HCT116 (cell line): ENCODE measurements at regions of chr12 and their contacts with region 1.

Region 1: GRCh38 chr12:91326058-91327027 is 143.7 kb upstream of the DCN start:
- DNase-seq: peak; percentile 19
- ATAC-seq: peak; percentile 55
- H3K4me3 ChIP-seq: no peak overlapping the region
- H3K27ac ChIP-seq: no peak overlapping the region
- H3K4me1 ChIP-seq: no peaks in the 10 kb centered on the region
- H3K27me3 ChIP-seq: no peaks in the 10 kb centered on the region
- CTCF ChIP-seq: peak; percentile 60 to 70 (median 66); a peak in 5 of 6 replicates
- POLR2A ChIP-seq: no peak
- RAD21 ChIP-seq: peak; percentile 64

Region 2: GRCh38 chr12:90978117-90978770 is 348.1 kb before region 1 on chr12:
- CTCF ChIA-PET with region 1: interaction called, 13 read pairs
- POLR2A ChIA-PET with region 1: no interaction called
- RAD21 ChIA-PET with region 1: no interaction called
- intact Hi-C with region 1: loop called (anchors 1 kb)
- DNase-seq: peak; percentile 43
- ATAC-seq: peak; percentile 92
- H3K4me3 ChIP-seq: no peak overlapping the region
- H3K27ac ChIP-seq: no peak overlapping the region
- H3K4me1 ChIP-seq: peaks cover 0 to 9% of the 10 kb centered on the region in 2 experiments; a peak in 1 of 4 replicates
- H3K27me3 ChIP-seq: no peaks in the 10 kb centered on the region
- CTCF ChIP-seq: peak; percentile 55 to 82 (median 75)
- POLR2A ChIP-seq: no peak
- RAD21 ChIP-seq: peak; percentile 86

Region 3: DNA sequence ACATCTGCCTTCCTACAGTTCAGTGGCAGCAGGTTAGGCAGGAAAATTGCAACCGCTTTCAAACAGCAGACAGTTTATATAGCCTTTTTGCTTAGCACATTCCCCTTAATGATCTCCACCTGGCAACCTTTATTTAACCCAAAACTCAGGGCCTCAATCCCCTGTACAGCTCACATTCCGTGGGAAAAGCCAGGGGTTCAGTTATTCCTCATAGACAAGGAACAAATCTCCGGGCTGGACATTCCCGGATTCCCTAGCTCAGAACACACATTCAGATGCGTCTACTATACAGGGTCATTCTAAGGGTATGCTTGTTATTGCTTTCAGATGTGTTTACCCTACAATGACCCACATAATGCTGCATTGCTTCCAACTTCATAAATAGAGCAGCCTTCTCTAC is 69.9 kb before region 1 on chr12:
- CTCF ChIA-PET with region 1: no interaction called
- POLR2A ChIA-PET with region 1: no interaction called
- RAD21 ChIA-PET with region 1: no interaction called
- intact Hi-C with region 1: no loop called
- DNase-seq: no peak
- ATAC-seq: no peak
- H3K4me3 ChIP-seq: no peak overlapping the region
- H3K27ac ChIP-seq: no peak overlapping the region
- H3K4me1 ChIP-seq: no peaks in the 10 kb centered on the region
- H3K27me3 ChIP-seq: no peaks in the 10 kb centered on the region
- CTCF ChIP-seq: no peak
- POLR2A ChIP-seq: no peak
- RAD21 ChIP-seq: no peak